Naive thymus-derived CD8-positive, alpha-beta T cell (primary cell): ENCODE measurements at regions of chr11 and their contacts with region 1.

Region 1: GRCh38 chr11:18721561-18722292 is 4.3 kb downstream of the IGSF22 start:
- DNase-seq: peak in 7 of 10 donors; percentile 21 to 66 (median 46)
- ATAC-seq: peak; percentile 64 to 66
- H3K4me3 Mint-ChIP-seq: peak overlapping the region; percentile 87 to 96 (median 93)
- H3K27ac Mint-ChIP-seq: peak overlapping the region in 9 of 10 donors; percentile 53 to 95 (median 68)
- H3K4me1 Mint-ChIP-seq: peaks cover 2 to 22% (median 8%) of the 10 kb centered on the region in 4 donors
- H3K27me3 Mint-ChIP-seq: no peaks in the 10 kb centered on the region

Region 2: DNA sequence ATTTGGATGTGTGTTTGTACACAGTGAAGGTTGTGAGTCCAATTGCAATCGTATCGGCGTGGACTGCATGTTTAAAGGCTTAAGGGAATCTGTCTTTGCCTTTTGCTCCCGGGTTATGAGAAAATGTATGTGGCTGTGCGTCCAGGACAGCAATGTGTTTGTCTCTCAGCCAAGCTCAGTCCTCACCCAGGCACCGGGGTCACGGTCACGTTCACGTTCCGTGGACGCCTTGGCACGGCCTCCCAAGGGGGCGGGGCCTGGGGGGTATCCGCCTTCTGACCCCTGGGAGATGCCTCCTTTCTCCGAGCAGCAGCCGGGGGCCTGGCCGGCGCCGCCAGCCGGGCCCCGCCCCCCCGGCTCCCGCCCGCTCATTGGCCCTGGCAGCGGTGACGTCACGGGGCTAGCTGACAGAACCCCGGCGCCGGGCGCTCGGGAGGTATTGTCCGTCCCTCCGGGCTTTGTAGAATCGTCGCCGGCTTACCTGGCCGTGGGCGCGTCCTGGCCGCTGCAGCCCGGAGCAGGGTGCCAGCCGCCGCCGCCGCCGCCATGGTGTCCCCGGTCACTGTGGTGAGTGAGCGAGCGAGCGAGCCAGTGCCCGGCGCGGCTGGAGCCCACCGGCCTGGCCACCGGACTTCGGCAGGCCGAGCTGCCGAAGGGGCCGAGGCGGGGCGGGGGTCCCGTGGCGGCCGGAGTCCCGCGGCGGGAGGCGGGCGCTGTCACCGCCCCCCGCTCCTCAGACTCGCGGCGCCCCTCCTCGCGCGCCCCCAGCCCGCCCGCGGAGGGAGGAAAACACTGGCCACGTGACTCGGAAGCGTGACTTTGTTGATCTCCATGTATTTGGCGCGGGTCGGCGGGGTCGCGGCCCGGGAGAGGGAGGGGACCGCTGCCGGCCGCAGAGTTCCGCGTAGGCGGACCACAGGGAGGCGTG is 23.1 kb before region 1 on chr11 and contains the start of gene TMEM86A:
- POLR2A ChIA-PET with region 1: interaction called, 10 read pairs
- DNase-seq: peak; percentile 86 to 94 (median 88)
- ATAC-seq: peak; percentile 91 to 93
- H3K4me3 Mint-ChIP-seq: peak within 1 kb of the TSS; percentile 70 to 90 (median 83)
- H3K27ac Mint-ChIP-seq: peak within 1 kb of the TSS; percentile 44 to 93 (median 90)
- H3K4me1 Mint-ChIP-seq: peaks cover 15 to 24% (median 21%) of the 10 kb centered on the region in 4 donors
- H3K27me3 Mint-ChIP-seq: no peaks in the 10 kb centered on the region
- polyA plus RNA-seq, gene TMEM86A: 0.43 to 1.9 (median 1.2) TPM

Region 3: GRCh38 chr11:18754308-18754707 is 32.6 kb after region 1 on chr11:
- POLR2A ChIA-PET with region 1: no interaction called
- DNase-seq: peak in 1 of 10 donors; percentile 21
- ATAC-seq: no peak
- H3K4me3 Mint-ChIP-seq: no peak overlapping the region
- H3K27ac Mint-ChIP-seq: no peak overlapping the region
- H3K4me1 Mint-ChIP-seq: peaks cover 0 to 3% (median 0%) of the 10 kb centered on the region in 4 donors
- H3K27me3 Mint-ChIP-seq: peaks cover 5 to 23% (median 6%) of the 10 kb centered on the region in 5 donors